ENCODE measurements at regions of chr5 and their contacts with region 1.

Region 1: DNA sequence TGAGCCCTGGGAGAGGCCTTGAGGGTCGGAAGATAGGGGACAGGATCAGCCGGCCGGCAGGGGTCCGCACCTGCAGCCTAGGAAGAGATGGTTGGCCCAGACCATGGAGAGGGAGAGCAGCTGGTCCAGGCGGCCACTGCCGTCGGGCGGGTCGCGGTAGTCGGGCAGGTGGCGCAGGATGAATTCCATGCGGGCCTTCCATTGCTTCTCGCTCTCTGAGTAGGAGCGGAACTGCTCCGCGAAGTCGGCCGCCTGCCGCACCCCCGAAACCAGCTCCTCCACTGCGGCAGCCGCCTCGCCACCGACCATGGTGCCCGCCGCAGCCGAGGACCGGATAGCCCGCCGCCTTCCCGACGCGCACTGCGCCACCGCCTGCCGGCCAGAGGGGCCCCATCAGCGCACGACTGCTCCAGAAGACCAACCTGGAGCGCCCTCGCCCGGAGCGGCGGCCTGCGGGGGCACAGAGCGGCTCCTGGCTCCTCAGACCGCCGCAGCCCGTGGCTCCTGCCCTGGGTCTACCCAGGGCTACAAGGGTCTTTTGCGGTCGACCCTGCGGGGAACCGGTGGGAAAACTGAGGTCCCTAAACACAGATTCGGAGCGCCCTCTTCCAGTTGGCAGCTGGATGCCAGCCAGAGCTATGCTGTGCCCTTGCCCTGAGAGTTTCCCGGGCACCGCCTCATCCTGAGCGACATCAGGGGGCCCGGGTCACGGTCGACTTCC is at the start of gene CDKN2AIPNL:
- DNase-seq: peak; percentile 92 to 97 (median 94)
- ATAC-seq: peak; percentile 97 to 100 (median 99)
- H3K4me3 ChIP-seq: peak within 1 kb of the TSS; percentile 62 to 98 (median 76)
- H3K27ac ChIP-seq: peak within 1 kb of the TSS; percentile 69 to 97 (median 90)
- H3K4me1 ChIP-seq: peaks cover 0 to 37% (median 22%) of the 10 kb centered on the region in 12 donors
- H3K27me3 ChIP-seq: no peaks in the 10 kb centered on the region
- CTCF ChIP-seq: peak; percentile 68 to 95 (median 78)
- POLR2A ChIP-seq: peak in 1 of 2 donors; percentile 72
- total RNA-seq, gene CDKN2AIPNL: 26.6 to 38.4 (median 32.3) TPM

Region 2: GRCh38 chr5:134171972-134172371 is 239.7 kb before region 1 on chr5:
- intact Hi-C with region 1: no loop called
- DNase-seq: no peak
- ATAC-seq: no peak
- H3K4me3 ChIP-seq: no peak overlapping the region
- H3K27ac ChIP-seq: no peak overlapping the region
- H3K4me1 ChIP-seq: peaks cover 3 to 51% (median 32%) of the 10 kb centered on the region in 12 donors
- H3K27me3 ChIP-seq: no peaks in the 10 kb centered on the region
- CTCF ChIP-seq: no peak
- POLR2A ChIP-seq: no peak

Region 3: GRCh38 chr5:134327327-134327726 is 84.4 kb before region 1 on chr5:
- intact Hi-C with region 1: no loop called
- DNase-seq: no peak
- ATAC-seq: no peak
- H3K4me3 ChIP-seq: no peak overlapping the region
- H3K27ac ChIP-seq: no peak overlapping the region
- H3K4me1 ChIP-seq: no peaks in the 10 kb centered on the region
- H3K27me3 ChIP-seq: no peaks in the 10 kb centered on the region
- CTCF ChIP-seq: no peak
- POLR2A ChIP-seq: no peak

Region 4: DNA sequence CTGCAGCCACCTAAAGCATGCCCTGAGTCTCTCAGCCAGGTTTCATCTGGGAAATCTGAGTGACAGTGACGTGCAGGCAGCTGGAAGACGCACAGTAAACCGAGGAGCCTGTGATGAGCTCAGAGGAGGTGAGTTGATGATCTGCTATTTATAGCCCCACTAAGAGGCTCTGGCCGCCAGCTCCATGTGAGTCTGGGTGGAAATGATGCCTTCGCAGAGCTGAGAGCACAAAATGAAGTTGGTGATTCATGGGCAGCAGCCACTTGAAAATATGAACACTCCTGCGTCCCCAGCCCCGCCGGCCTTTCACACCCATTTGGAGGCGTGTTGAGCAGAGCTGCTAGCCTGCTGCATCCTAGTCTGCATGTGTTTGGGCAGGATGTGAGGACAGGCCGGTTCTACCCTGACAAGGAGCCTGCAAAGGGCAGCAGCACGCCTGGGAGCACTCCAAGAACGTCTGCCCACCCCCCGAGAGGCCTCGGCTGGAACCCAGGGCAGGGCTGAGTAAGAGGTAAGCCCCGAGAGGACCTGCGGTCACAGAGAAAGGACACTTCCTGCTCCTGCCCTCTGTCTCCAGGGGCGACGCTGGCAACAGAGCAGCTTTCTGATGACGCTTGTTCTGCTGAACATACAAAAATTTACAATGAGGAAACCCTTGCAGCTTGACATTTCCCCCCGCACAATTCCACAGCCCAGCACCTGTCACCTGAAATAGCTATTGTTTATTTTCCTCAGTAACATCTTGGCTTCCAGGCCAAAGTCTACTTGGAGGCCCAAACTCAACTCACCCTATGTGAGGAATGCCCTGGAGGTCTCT is 25.0 kb after region 1 on chr5:
- intact Hi-C with region 1: loop called in 4 of 10 experiments (anchors 1 to 2 kb)
- DNase-seq: peak; percentile 46 to 90 (median 73)
- ATAC-seq: peak; percentile 74 to 89 (median 85)
- H3K4me3 ChIP-seq: peak overlapping the region in 5 of 12 donors; percentile 19 to 30 (median 24)
- H3K27ac ChIP-seq: peak overlapping the region; percentile 41 to 95 (median 84)
- H3K4me1 ChIP-seq: peaks cover 18 to 40% (median 37%) of the 10 kb centered on the region in 12 donors
- H3K27me3 ChIP-seq: no peaks in the 10 kb centered on the region
- CTCF ChIP-seq: no peak
- POLR2A ChIP-seq: no peak

Region 5: GRCh38 chr5:134503088-134503946 is 91.6 kb after region 1 on chr5:
- intact Hi-C with region 1: loop called in 1 of 10 experiments (anchors 5 kb)
- DNase-seq: peak; percentile 62 to 89 (median 69)
- ATAC-seq: peak; percentile 16 to 81 (median 78)
- H3K4me3 ChIP-seq: no peak overlapping the region
- H3K27ac ChIP-seq: peak overlapping the region; percentile 8 to 86 (median 76)
- H3K4me1 ChIP-seq: peaks cover 5 to 42% (median 27%) of the 10 kb centered on the region in 12 donors
- H3K27me3 ChIP-seq: no peaks in the 10 kb centered on the region
- CTCF ChIP-seq: no peak
- POLR2A ChIP-seq: peak in 1 of 2 donors; percentile 57

Region 6: DNA sequence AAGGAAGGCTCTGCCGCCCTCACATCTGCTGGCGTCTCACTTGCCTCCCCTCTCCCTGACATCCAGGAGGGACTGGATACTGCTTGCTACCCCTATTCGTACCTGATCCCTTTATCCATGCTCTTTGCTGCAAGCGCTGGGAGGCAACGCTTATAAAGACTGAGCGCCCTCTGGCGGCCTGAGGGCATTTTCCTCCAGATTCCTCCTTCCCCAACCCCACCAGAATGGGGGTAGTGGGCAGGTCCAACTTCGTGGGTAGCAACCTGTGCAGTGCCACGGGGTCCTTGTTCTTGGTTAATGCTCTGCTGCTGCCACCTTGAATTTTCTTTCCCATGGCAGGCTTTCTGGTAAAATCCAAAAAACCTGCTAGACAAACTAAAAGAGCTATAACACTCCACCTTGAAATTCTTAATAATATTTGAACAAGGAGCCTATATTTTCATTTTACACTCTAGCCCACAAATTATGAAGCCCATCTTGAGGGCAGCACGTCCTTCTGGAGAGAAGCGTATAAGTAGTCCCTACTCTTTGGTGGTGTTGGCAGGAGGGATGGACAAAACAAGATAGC is 166.2 kb after region 1 on chr5:
- intact Hi-C with region 1: loop called in 9 of 10 experiments (anchors 1 to 5 kb)
- DNase-seq: peak; percentile 71 to 89 (median 77)
- ATAC-seq: peak in 3 of 4 donors; percentile 30 to 53 (median 51)
- H3K4me3 ChIP-seq: no peak overlapping the region
- H3K27ac ChIP-seq: peak overlapping the region in 2 of 12 donors; percentile 20 to 30
- H3K4me1 ChIP-seq: peaks cover 0 to 55% (median 33%) of the 10 kb centered on the region in 12 donors
- H3K27me3 ChIP-seq: no peaks in the 10 kb centered on the region
- CTCF ChIP-seq: peak; percentile 73 to 89 (median 84)
- POLR2A ChIP-seq: no peak

Region 7: DNA sequence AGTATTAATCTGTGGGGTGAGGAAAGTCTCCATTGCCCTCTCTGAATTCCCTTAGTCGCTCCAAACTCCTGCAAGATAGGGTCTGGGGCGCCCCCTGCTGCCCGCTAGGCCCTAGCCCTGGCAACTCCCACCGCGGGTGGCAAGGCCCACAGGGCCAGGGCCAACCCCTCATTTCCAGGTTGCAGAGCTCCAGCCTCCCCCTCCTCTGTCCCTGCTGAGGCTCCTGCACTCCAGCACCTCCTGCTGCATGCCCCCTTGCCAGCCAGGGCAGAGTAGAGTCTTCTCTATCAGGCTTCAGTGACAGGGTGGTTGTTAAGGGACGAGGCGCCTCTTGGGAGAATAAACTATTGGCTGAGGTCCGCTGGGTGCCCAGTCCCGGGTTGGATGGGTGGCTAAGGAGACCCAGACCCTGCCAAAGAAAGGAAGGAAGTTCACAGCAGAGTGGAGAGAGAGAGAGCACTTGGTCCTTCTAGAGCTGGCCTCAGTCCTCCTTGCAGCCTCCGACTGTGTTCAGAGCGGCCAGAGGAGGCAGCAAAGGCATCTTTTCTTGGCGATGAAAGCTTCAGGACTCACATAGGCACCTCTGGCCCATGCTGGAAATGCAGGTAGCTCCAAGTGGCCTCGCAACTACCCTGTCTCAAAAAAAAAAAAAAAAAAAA is 175.3 kb after region 1 on chr5:
- intact Hi-C with region 1: loop called in 1 of 10 experiments (anchors 5 kb)
- DNase-seq: peak; percentile 74 to 93 (median 81)
- ATAC-seq: peak; percentile 77 to 90 (median 86)
- H3K4me3 ChIP-seq: peak overlapping the region in 5 of 12 donors; percentile 10 to 37 (median 17)
- H3K27ac ChIP-seq: no peak overlapping the region
- H3K4me1 ChIP-seq: peaks cover 0 to 26% (median 11%) of the 10 kb centered on the region in 12 donors
- H3K27me3 ChIP-seq: no peaks in the 10 kb centered on the region
- CTCF ChIP-seq: peak; percentile 72 to 89 (median 82)
- POLR2A ChIP-seq: no peak